OCI-LY7 (cell line): ENCODE measurements at regions of chr12 and their contacts with region 1.

Region 1: GRCh38 chr12:104286538-104287482 is 16.7 kb upstream of the EID3 start:
- DNase-seq: peak; percentile 98
- H3K4me3 ChIP-seq: peak overlapping the region; percentile 99
- H3K27ac ChIP-seq: peak overlapping the region; percentile 95
- H3K4me1 ChIP-seq: peaks cover 27% of the 10 kb centered on the region
- CTCF ChIP-seq: 0 out of 2 replicates have a peak, but pooled peaks have one; percentile 18

Region 2: GRCh38 chr12:103936679-103937078 is 350.1 kb before region 1 on chr12:
- CTCF ChIA-PET with region 1: no interaction called
- POLR2A ChIA-PET with region 1: no interaction called
- intact Hi-C with region 1: no loop called
- DNase-seq: no peak
- H3K4me3 ChIP-seq: no peak overlapping the region
- H3K27ac ChIP-seq: no peak overlapping the region
- H3K4me1 ChIP-seq: peaks cover 30% of the 10 kb centered on the region
- CTCF ChIP-seq: no peak

Region 3: GRCh38 chr12:103965590-103966504 is 321.0 kb before region 1 on chr12 and contains the start of gene TDG:
- CTCF ChIA-PET with region 1: no interaction called
- POLR2A ChIA-PET with region 1: interaction called, 6 read pairs
- intact Hi-C with region 1: loop called (anchors 2 kb)
- DNase-seq: peak; percentile 98
- H3K4me3 ChIP-seq: peak within 1 kb of the TSS; percentile 87
- H3K27ac ChIP-seq: peak within 1 kb of the TSS; percentile 69
- H3K4me1 ChIP-seq: peaks cover 40% of the 10 kb centered on the region
- CTCF ChIP-seq: peak; percentile 28; the same call in 1 of the 2 replicates
- total RNA-seq, gene TDG: 39.4 and 43.3 TPM in 2 replicates

Region 4: GRCh38 chr12:104201238-104202001 is 85.4 kb before region 1 on chr12:
- CTCF ChIA-PET with region 1: no interaction called
- POLR2A ChIA-PET with region 1: no interaction called
- intact Hi-C with region 1: loop called (anchors 2 kb)
- DNase-seq: peak; percentile 71
- H3K4me3 ChIP-seq: no peak overlapping the region
- H3K27ac ChIP-seq: no peak overlapping the region
- H3K4me1 ChIP-seq: no peaks in the 10 kb centered on the region
- CTCF ChIP-seq: peak; percentile 95

Region 5: DNA sequence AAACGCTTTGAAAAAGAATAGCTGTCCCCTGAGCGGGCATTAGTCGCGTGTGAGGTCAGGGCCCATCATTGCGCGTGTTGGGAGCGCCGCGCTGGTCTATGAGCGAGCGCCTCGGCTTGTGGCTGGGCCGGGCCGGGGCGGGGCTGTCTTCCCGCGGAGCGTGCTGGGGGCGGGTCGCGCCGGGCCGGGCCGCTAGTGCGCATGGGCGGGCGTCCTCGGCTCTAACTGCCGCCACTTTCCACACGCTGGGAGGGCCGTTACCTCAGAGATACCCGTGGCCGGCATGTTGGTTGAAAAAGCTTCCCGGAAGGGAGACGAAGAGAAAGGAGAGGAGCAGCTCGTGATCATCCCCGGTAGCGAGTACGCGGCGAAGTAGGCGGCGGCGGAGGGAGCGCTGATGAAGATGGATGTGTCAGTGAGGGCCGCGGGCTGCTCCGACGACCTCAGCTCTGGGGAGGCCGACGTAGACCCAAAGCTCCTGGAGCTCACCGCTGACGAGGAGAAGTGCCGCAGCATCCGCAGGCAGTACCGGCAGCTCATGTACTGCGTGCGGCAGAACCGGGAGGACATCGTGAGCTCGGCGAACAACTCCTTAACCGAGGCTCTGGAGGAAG is 16.8 kb after region 1 on chr12 and contains the start of gene EID3:
- CTCF ChIA-PET with region 1: interaction called, 7 read pairs
- POLR2A ChIA-PET with region 1: interaction called, 11 read pairs
- intact Hi-C with region 1: no loop called
- DNase-seq: peak; percentile 70
- H3K4me3 ChIP-seq: peak within 1 kb of the TSS; percentile 64
- H3K27ac ChIP-seq: peak within 1 kb of the TSS; percentile 47
- H3K4me1 ChIP-seq: peaks cover 27% of the 10 kb centered on the region
- CTCF ChIP-seq: no peak
- total RNA-seq, gene EID3: 7.2 and 8.2 TPM in 2 replicates

Region 6: DNA sequence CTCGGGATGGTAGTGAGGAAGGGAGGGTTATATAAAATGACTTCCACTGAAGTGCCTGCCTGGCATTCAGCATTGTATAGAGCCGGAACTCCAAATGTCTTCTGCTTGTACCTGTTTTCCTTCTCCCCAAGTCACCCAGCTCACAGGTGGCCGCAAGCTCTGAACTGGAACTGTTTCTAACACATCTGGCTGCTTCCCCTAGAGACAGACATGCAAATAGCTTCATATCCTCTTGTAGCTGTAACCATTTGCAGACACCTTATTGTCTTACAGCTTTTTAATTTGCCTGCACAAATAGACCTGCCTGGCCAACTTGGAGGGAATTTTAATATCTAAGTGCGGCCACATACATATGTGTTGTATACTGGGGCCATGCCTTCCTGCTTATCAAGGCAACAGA is 295.9 kb after region 1 on chr12:
- CTCF ChIA-PET with region 1: no interaction called
- POLR2A ChIA-PET with region 1: no interaction called
- intact Hi-C with region 1: loop called (anchors 5 kb)
- DNase-seq: peak; percentile 96
- H3K4me3 ChIP-seq: peak overlapping the region; percentile 59
- H3K27ac ChIP-seq: peak overlapping the region; percentile 100
- H3K4me1 ChIP-seq: peaks cover 95% of the 10 kb centered on the region
- CTCF ChIP-seq: no peak

Region 7: DNA sequence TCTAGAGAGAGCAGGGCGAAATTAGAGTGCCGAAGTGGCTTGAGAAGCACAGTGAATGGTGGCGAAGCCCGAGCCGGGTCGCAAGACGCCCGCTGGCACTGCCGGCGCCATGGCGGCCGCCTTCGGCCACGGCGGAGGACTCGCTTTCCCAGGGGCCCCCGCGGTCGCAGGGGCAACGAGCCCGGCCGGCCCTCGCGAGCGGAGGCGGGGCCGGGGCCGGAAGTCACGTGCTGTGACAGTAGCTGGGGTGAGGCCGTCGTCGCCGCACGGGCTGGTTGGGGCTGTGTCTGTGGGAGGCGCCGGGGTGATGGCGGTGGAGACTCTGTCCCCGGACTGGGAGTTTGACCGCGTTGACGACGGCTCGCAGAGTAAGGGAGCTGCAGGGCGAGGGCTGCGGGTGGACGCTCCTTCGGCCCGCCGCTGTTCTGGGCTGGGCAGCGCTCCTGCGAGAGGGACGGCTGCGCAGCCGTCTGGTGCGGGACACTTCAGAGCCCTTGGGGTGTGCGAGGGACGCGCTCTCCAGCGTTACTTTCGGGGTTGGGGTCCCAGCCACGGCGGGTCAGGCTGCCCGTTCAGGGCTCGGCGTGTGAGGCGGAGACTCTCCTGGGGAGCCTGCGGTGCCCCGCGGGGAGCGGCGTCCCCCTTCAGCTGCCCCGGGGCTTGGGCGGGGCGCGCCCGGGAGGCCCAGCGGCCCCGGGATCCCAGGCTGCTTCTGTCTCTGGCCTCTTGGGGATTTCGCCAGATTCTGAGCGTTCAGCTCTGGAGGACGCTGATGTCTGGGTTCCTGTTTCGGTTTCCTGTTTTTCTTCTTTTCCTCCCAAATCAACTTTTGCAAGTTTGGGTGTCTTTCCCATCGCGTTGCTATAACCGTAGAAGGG is 820.9 kb after region 1 on chr12 and contains the start of gene WASHC4:
- CTCF ChIA-PET with region 1: no interaction called
- POLR2A ChIA-PET with region 1: interaction called, 8 read pairs
- intact Hi-C with region 1: loop called (anchors 5 kb)
- DNase-seq: peak; percentile 95
- H3K4me3 ChIP-seq: peak within 1 kb of the TSS; percentile 99
- H3K27ac ChIP-seq: peak within 1 kb of the TSS; percentile 96
- H3K4me1 ChIP-seq: peaks cover 36% of the 10 kb centered on the region
- CTCF ChIP-seq: no peak
- total RNA-seq, gene WASHC4: 54.8 and 63.6 TPM in 2 replicates